ENCODE measurements at regions of chr5 and their contacts with region 1.

Region 1: GRCh38 chr5:103475629-103476240 is 86.9 kb downstream of the NUDT12 start:
- DNase-seq: no peak
- H3K4me3 ChIP-seq: no peak overlapping the region
- CTCF ChIP-seq: peak; percentile 42

Region 2: GRCh38 chr5:103203226-103203625 is 272.5 kb before region 1 on chr5:
- CTCF ChIA-PET with region 1: interaction called, 24 read pairs
- POLR2A ChIA-PET with region 1: no interaction called
- DNase-seq: no peak
- H3K4me3 ChIP-seq: no peak overlapping the region
- CTCF ChIP-seq: no peak

Region 3: DNA sequence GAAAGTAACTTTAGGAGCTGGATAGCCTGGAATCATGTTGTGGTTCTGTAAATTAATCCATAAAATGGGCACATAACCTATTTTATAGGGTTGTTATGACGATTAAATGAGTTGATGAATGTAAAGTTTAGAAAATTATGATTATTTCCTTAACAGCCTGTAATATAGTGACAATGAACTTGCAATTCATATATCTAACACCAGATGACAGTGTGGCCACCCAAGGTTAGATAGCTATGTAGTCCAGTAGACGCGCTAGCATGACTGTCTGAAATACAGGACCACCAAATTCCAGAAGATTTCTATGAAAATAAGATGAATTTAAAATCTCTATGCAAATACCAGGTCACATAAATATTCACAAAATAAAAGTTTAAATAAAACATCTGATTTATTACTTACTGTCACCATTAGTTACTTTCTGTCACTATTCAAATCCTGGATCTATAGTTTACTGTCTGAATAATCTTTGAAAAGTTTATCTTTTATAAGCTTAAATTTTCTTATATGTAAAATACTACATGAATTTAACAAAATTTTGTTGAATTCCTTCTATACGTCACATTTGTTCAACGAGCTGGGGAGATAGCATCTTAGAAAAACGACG is 243.2 kb before region 1 on chr5:
- CTCF ChIA-PET with region 1: interaction called, 145 read pairs
- POLR2A ChIA-PET with region 1: no interaction called
- DNase-seq: no peak
- H3K4me3 ChIP-seq: no peak overlapping the region
- CTCF ChIP-seq: peak; percentile 38

Region 4: DNA sequence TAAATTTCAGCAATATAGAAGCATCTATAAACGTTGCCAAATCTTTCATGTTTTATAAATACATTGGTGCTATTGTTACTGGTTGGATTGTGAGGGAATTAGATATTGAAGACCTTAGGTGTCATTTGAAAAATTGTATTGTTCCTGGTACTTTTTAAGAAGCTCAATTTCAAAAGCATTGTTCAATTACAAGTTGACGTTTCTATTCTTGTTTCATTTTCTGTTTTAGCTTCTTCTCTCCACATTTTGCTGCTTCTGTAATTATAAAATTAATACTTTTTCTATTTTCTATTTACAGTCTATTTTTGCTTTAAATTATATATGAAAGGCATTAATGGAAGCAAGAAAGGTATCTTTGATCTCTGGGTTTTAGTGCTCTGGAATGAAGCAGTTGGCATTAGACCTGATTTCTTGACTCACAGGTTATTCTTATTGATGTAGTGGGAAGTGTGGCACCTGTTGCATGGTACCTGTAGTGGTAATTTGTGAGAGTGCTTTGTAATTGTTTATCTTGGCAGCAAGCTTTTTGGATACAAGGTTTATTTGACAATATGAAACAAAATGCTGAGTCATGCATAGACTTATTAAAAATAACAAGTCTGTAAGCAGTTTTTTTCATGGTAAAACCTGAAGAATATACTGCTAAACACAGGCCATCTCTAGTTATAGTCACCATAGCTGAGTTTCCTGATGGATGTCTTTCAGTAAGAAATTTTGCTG is 204.0 kb before region 1 on chr5:
- CTCF ChIA-PET with region 1: interaction called, 11 read pairs
- POLR2A ChIA-PET with region 1: no interaction called
- DNase-seq: no peak
- H3K4me3 ChIP-seq: no peak overlapping the region
- CTCF ChIP-seq: no peak

Region 5: DNA sequence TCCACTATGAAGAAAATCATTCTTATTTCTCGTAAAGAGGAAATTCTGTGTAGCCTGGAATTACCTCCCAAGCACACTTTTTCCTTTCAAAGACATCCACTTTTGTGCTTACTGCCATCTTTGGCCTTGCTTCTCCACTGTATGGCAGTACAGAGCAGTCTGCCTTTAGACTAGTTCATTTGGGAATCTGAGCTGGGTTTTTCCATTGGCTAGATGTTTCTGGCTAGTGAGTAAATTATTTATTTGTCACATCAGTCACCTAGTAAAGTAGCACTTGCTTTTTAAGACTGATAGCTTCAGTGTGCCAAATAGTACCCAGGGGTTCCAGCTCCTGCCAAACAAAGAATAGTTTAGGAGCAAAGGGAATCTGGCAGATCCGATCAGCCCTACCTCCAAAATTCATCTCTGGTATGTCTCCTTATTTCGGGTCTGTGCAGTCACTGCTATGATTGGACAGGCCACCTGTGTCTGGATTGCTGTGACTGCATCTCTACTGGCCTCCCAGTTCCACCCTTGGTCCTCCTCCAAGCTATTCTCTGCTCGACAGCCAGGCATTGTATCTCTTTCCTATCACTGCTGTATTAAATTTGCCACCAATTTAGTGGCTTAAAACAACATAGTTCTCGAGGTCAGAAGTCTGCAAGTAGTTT is 10.8 kb before region 1 on chr5:
- CTCF ChIA-PET with region 1: interaction called, 18 read pairs
- POLR2A ChIA-PET with region 1: no interaction called
- DNase-seq: no peak
- H3K4me3 ChIP-seq: no peak overlapping the region
- CTCF ChIP-seq: no peak

Region 6: GRCh38 chr5:104146652-104147051 is 670.9 kb after region 1 on chr5:
- CTCF ChIA-PET with region 1: no interaction called
- POLR2A ChIA-PET with region 1: no interaction called
- DNase-seq: no peak
- H3K4me3 ChIP-seq: no peak overlapping the region
- CTCF ChIP-seq: no peak

Measured in AG04449 (cell line).